ENCODE measurements at regions of chr6 and their contacts with region 1.

Region 1: GRCh38 chr6:2917065-2917464 is 14.0 kb upstream of the SERPINB9 start:
- DNase-seq: peak in 1 of 2 experiments; percentile 6
- ATAC-seq: peak; percentile 54 to 62; a peak in 3 of 6 replicates
- H3K4me3 ChIP-seq: no peak overlapping the region
- H3K27ac ChIP-seq: no peak overlapping the region
- H3K4me1 ChIP-seq: no peaks in the 10 kb centered on the region
- CTCF ChIP-seq: no peak
- EP300 ChIP-seq: no peak
- POLR2A ChIP-seq: no peak
- RAD21 ChIP-seq: no peak

Region 2: DNA sequence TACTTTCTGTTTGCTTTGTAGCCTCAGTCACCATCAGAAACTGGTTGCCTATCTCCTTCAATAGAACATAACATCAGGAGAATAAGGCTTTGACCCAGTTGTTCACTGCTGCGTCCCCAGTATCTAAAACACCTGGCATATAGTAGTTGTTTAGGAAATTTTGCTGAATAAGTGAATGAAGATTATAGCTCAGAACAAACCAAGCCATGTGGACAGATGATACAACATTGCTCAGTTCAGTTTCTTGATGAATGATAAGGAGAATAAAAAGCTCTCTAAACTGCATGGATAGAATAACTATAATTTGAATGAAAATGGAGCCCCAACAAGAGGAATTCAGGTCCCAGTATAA is 70.2 kb before region 1 on chr6:
- CTCF ChIA-PET with region 1: interaction called, 29 read pairs
- POLR2A ChIA-PET with region 1: interaction called, 5 read pairs
- DNase-seq: no peak
- ATAC-seq: 0 out of 6 replicates have a peak, but pooled peaks of 1 of the 2 experiments have one; percentile 21
- H3K4me3 ChIP-seq: peak overlapping the region; percentile 13; the same call in 1 of the 3 replicates
- H3K27ac ChIP-seq: peak overlapping the region; percentile 81 to 94
- H3K4me1 ChIP-seq: peaks cover 39% of the 10 kb centered on the region
- CTCF ChIP-seq: no peak
- EP300 ChIP-seq: no peak
- POLR2A ChIP-seq: no peak
- RAD21 ChIP-seq: no peak